ENCODE measurements at regions of chr3 and their contacts with region 1.

Region 1: GRCh38 chr3:39216176-39216790 is 23.9 kb upstream of the XIRP1 start:
- DNase-seq: peak in 1 of 9 experiments; percentile 42
- ATAC-seq: no peak
- H3K4me3 ChIP-seq: no peak overlapping the region
- H3K4me3 Mint-ChIP-seq: no peak overlapping the region
- H3K27ac ChIP-seq: peak overlapping the region in 1 of 2 experiments; percentile 36
- H3K27ac Mint-ChIP-seq: no peak overlapping the region
- H3K4me1 ChIP-seq: no peaks in the 10 kb centered on the region
- H3K4me1 Mint-ChIP-seq: peaks cover 5% of the 10 kb centered on the region
- H3K27me3 ChIP-seq: no peaks in the 10 kb centered on the region
- H3K27me3 Mint-ChIP-seq: no peaks in the 10 kb centered on the region
- CTCF ChIP-seq: no peak

Region 2: DNA sequence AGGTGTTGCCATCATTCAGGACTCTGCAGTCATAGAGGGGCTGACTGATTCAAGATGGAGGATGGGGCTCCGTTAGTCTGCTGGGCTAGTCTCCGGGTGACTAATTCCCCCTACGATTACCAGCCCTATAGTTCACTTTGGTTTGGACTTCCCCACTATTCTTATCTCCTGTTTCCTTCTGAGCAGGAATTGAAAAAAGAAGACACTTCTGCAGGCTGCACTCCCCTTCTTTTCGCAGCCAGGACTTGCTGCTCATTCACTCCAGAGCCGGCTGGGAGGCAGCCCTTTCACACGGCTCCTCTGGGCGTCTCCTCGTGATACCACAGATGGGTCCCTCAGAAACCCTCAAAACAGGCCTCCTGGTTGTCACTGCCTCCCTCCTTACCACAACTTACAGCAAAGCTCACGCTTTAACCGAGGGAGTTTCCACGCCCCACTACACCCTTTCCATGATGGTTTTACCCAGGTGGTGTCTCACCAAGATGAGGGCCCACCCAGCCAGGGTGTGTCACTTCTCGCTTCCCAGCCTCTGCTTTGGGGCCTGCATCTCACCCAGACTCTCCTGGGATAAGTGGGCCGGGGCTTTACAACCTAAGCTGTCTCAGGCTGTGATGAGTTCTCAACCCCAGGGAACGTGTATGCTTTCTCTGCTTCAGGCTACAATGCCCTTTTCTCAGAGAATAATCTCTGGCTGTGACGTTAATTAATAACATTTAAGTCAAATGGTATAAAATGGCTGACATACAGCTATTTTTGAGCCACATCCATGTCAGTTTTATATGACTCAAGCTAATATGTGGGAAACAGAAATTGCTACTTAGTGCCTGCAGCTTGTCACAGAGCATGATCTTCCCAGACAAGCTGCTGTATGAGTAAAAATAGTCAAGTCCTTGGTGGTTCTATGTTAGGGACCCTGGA is 51.6 kb after region 1 on chr3:
- CTCF ChIA-PET with region 1: no interaction called
- POLR2A ChIA-PET with region 1: no interaction called
- intact Hi-C with region 1: loop called in 1 of 2 experiments (anchors 5 kb)
- DNase-seq: peak; percentile 35 to 95 (median 64)
- ATAC-seq: peak; percentile 87
- H3K4me3 ChIP-seq: peak overlapping the region in 1 of 2 experiments; percentile 18
- H3K4me3 Mint-ChIP-seq: peak overlapping the region; percentile 30
- H3K27ac ChIP-seq: peak overlapping the region; percentile 42 to 86
- H3K27ac Mint-ChIP-seq: peak overlapping the region; percentile 89
- H3K4me1 ChIP-seq: peaks cover 22% of the 10 kb centered on the region
- H3K4me1 Mint-ChIP-seq: peaks cover 26% of the 10 kb centered on the region
- H3K27me3 ChIP-seq: no peaks in the 10 kb centered on the region
- H3K27me3 Mint-ChIP-seq: no peaks in the 10 kb centered on the region
- CTCF ChIP-seq: no peak